ENCODE measurements at regions of chr22 and their contacts with region 1.

Region 1: GRCh38 chr22:35299673-35300497 is at the start of gene TOM1:
- DNase-seq: peak; percentile 99
- ATAC-seq: peak; percentile 97
- total RNA-seq, gene TOM1: 62.5 TPM

Region 2: DNA sequence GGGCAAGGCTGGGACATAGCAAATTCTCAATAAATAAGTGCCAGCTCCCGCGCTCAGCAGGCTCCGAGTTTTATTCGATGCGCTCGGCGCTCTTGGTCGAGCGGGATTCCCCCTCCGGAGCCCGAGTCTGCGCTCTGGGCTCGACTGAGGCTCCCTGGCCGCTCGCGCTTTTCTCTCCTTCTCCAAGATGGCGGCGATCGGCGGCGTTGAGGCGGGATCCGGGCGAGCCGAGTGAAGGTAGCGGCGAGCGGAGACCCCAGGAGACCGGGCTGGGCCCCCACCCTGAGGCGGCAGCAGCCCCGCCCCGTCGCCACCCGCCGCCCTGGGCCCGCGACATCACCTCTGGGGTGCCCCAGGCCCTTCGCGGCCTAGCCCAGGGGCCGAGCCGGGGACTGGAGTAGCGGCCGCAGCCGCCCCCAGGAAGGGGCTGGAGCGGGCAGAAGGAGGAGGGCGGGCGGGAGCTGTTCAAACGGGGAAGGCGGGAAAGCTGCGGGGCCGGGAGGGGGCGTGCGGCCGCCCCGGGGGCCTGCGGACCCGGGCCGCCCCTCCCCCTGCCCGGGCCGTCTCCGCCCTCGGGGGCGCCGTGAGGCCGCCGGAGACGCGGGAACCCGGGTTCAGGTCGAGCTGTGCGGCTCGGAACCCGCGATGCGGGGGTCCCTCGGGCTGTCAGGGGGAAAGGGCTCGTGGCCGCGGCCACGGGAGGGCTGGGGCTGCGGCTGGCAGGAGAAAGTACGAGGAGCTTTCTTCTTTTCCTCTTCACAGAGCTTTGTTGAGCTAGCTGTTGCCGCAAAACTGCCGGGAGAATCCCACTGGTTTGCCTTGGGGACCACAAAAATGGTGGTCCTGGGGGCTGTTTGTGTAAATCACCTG is 42.3 kb before region 1 on chr22 and contains the start of gene HMGXB4:
- intact Hi-C with region 1: loop called (anchors 2 kb)
- DNase-seq: peak; percentile 94
- ATAC-seq: peak; percentile 96
- total RNA-seq, gene HMGXB4: 9.4 TPM

Region 3: DNA sequence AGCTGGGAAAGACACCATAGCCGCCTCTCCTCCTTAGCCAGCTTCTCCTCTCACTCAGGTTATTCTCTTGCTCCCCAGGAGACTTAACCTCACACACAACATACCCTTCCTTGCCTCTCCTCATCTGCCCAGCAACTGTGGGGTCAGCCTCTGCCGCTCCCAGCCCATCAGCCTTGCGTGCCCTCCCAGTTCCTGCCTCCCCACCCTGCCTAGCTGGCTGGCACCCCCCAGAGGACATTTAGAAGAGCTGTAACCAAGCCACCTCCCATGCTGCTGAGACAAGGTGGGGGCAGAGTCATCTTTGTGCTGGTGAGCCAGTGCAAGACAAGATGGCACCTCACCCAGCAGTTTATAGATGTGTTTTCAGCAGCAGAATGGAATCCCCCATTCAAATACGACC is 38.0 kb after region 1 on chr22:
- intact Hi-C with region 1: loop called (anchors 2 kb)
- DNase-seq: peak; percentile 17
- ATAC-seq: no peak

Region 4: DNA sequence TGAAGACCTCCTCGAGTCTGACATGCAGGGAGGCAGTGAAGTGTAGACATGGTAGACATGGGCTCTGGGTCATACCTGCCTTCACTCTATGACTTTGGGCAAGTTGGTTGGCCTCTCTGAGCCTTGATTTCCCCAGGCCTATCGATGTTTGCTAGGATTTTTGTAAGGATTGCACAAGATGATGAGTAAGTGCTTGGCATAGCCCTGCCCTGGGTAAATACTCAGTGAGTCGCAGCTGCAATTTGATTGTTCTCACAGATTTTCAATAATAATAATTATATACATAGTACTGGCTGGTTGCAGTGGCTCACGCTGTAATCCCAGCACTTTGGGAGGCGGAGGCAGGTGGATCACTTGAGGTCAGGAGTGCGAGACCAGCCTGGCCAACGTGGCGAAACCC is 118.2 kb after region 1 on chr22:
- intact Hi-C with region 1: no loop called
- DNase-seq: no peak
- ATAC-seq: no peak